MCF 10A (cell line): ENCODE measurements at regions of chr2 and their contacts with region 1.

Region 1: GRCh38 chr2:119366649-119367471 is at the starts of genes C2orf76 and DBI:
- DNase-seq: peak; percentile 97
- H3K4me3 Mint-ChIP-seq: peak within 1 kb of the TSS; percentile 100
- H3K27ac Mint-ChIP-seq: peak within 1 kb of the TSS; percentile 93
- H3K4me1 Mint-ChIP-seq: peaks cover 23% of the 10 kb centered on the region
- H3K27me3 Mint-ChIP-seq: no peaks in the 10 kb centered on the region
- CTCF ChIP-seq: no peak
- total RNA-seq, gene C2orf76: 9.7 and 9.8 TPM in 2 replicates
- total RNA-seq, gene DBI: 76.8 and 104 TPM in 2 replicates

Region 2: DNA sequence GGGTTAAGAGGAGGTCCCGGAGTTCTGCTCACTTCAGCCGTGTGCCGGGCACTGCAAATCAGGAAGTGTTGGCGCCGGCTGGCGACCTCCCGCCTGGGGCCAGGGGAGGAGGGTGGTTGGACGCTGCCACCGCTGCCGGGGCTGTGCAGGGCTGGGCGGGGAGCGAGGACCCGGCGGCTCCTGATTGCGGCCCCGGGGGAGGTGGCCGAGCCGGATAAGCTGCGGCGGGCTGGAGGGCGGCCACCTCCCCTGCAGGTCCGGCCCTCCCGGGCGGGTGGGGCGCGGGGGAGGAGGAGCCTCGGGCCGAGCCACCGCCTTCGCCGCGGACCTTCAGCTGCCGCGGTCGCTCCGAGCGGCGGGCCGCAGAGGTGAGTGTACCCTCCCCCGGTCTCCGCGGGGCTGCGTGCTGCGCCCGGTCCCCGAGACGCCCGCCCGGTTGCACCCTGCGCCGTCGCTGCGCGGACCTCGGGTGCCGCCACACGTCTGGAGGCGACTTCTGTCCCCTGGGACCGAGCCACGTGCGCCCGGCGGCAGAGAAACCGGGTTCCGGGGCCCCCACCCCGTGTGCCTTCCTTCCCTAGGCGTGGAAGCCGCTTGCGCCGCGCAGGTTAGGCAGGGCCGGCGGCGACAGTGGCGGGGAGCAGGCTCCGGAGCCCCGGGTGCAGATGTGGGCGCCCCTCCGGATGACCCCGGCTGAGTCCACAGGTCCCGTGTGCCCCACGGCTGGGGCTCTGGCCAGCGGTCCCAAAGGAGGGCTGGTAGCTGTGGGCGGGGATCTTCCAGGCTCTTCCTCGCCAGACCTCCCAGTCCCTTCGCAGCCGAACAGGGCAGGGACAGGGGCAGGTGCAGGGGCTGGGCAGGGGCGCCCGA is 143.1 kb before region 1 on chr2 and contains the start of gene STEAP3:
- CTCF ChIA-PET with region 1: no interaction called
- POLR2A ChIA-PET with region 1: interaction called, 3 read pairs
- intact Hi-C with region 1: loop called (anchors 10 kb)
- DNase-seq: peak; percentile 66
- H3K4me3 Mint-ChIP-seq: peak within 1 kb of the TSS; percentile 68
- H3K27ac Mint-ChIP-seq: peak within 1 kb of the TSS; percentile 63
- H3K4me1 Mint-ChIP-seq: peaks cover 11% of the 10 kb centered on the region
- H3K27me3 Mint-ChIP-seq: no peaks in the 10 kb centered on the region
- CTCF ChIP-seq: no peak
- total RNA-seq, gene STEAP3: 23.8 and 25.0 TPM in 2 replicates

Region 3: DNA sequence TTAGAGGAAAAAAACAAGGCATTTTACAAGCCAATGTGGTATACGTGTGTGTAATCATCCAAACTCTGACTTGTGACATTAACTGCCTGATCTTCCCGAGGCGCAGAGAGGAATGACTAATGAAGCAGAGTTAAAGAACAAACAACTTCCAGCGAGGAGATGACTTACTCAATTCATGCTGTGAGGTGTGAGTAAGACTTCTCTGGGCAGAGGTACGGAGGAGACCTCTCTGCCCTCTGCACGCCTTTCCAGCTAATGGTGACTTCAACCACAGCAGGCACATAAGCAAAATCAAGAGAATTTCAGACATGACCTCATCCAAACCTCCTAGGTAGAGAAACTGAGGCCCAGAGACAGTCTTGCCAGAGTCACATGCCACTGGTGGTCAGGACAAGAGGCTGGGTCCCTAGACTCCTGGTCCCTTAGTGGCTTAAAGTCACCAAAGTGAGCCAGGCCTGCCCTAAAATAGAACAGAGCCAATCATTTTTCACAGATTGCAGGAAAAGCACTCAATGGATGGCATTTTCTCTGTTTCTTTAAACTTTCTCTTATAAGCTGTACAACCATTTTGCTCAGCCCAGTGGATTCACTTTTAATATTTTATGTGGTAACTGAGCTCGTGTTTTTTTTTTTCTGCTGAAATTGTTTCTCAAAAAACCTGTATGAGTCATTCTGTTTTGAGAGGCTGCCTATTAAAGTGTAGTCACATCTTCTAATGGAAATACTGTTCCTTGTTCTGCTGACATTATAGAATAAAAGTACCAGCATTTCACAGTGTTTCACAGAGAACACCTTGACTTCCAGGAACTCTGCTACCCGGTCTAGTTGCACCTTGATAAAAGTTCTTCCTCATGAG is 113.8 kb before region 1 on chr2:
- CTCF ChIA-PET with region 1: no interaction called
- POLR2A ChIA-PET with region 1: interaction called, 10 read pairs
- intact Hi-C with region 1: no loop called
- DNase-seq: peak; percentile 96
- H3K4me3 Mint-ChIP-seq: peak overlapping the region; percentile 38
- H3K27ac Mint-ChIP-seq: peak overlapping the region; percentile 96
- H3K4me1 Mint-ChIP-seq: peaks cover 41% of the 10 kb centered on the region
- H3K27me3 Mint-ChIP-seq: no peaks in the 10 kb centered on the region
- CTCF ChIP-seq: no peak

Region 4: GRCh38 chr2:119352357-119352756 is 14.5 kb before region 1 on chr2:
- CTCF ChIA-PET with region 1: interaction called, 4 read pairs
- POLR2A ChIA-PET with region 1: interaction called, 45 read pairs
- intact Hi-C with region 1: no loop called
- DNase-seq: peak; percentile 29
- H3K4me3 Mint-ChIP-seq: no peak overlapping the region
- H3K27ac Mint-ChIP-seq: no peak overlapping the region
- H3K4me1 Mint-ChIP-seq: peaks cover 7% of the 10 kb centered on the region
- H3K27me3 Mint-ChIP-seq: no peaks in the 10 kb centered on the region
- CTCF ChIP-seq: no peak

Region 5: GRCh38 chr2:119378566-119378965 is 11.7 kb after region 1 on chr2:
- CTCF ChIA-PET with region 1: interaction called, 3 read pairs
- POLR2A ChIA-PET with region 1: interaction called, 12 read pairs
- intact Hi-C with region 1: no loop called
- DNase-seq: no peak
- H3K4me3 Mint-ChIP-seq: no peak overlapping the region
- H3K27ac Mint-ChIP-seq: no peak overlapping the region
- H3K4me1 Mint-ChIP-seq: no peaks in the 10 kb centered on the region
- H3K27me3 Mint-ChIP-seq: no peaks in the 10 kb centered on the region
- CTCF ChIP-seq: no peak

Region 6: GRCh38 chr2:119838179-119838578 is 471.3 kb after region 1 on chr2:
- CTCF ChIA-PET with region 1: no interaction called
- POLR2A ChIA-PET with region 1: no interaction called
- intact Hi-C with region 1: no loop called
- DNase-seq: peak; percentile 38
- H3K4me3 Mint-ChIP-seq: peak overlapping the region; percentile 66
- H3K27ac Mint-ChIP-seq: peak overlapping the region; percentile 90
- H3K4me1 Mint-ChIP-seq: peaks cover 26% of the 10 kb centered on the region
- H3K27me3 Mint-ChIP-seq: no peaks in the 10 kb centered on the region
- CTCF ChIP-seq: no peak